B cell (primary cell): ENCODE measurements at regions of chr10 and their contacts with region 1.

Region 1: GRCh38 chr10:72215652-72216549 is at the starts of genes ANAPC16 and ASCC1:
- DNase-seq: peak; percentile 97
- ATAC-seq: peak; percentile 78
- H3K4me3 ChIP-seq: peak within 1 kb of the TSS; percentile 79 to 92 (median 83)
- H3K4me3 Mint-ChIP-seq: peak within 1 kb of the TSS; percentile 99
- H3K27ac ChIP-seq: peak within 1 kb of the TSS; percentile 92
- H3K27ac Mint-ChIP-seq: peak within 1 kb of the TSS; percentile 100
- H3K4me1 ChIP-seq: peaks cover 42 to 54% of the 10 kb centered on the region in 2 donors
- H3K4me1 Mint-ChIP-seq: peaks cover 54% of the 10 kb centered on the region
- H3K27me3 ChIP-seq: no peaks in the 10 kb centered on the region
- H3K27me3 Mint-ChIP-seq: no peaks in the 10 kb centered on the region
- CTCF ChIP-seq: no peak
- total RNA-seq, gene ANAPC16: 128 and 132 TPM in 2 replicates
- total RNA-seq, gene ASCC1: 28.1 and 31.3 TPM in 2 replicates

Region 2: GRCh38 chr10:72088889-72089575 is 126.9 kb before region 1 on chr10:
- CTCF ChIA-PET with region 1: no interaction called
- POLR2A ChIA-PET with region 1: interaction called, 11 read pairs
- intact Hi-C with region 1: loop called (anchors 1 kb)
- DNase-seq: no peak
- ATAC-seq: no peak
- H3K4me3 ChIP-seq: peak overlapping the region in 4 of 5 experiments; percentile 79 to 93 (median 88)
- H3K4me3 Mint-ChIP-seq: peak overlapping the region; percentile 100
- H3K27ac ChIP-seq: peak overlapping the region; percentile 89 to 92
- H3K27ac Mint-ChIP-seq: peak overlapping the region; percentile 100
- H3K4me1 ChIP-seq: peaks cover 24 to 33% of the 10 kb centered on the region in 2 donors
- H3K4me1 Mint-ChIP-seq: peaks cover 47% of the 10 kb centered on the region
- H3K27me3 ChIP-seq: no peaks in the 10 kb centered on the region
- H3K27me3 Mint-ChIP-seq: no peaks in the 10 kb centered on the region
- CTCF ChIP-seq: no peak

Region 3: DNA sequence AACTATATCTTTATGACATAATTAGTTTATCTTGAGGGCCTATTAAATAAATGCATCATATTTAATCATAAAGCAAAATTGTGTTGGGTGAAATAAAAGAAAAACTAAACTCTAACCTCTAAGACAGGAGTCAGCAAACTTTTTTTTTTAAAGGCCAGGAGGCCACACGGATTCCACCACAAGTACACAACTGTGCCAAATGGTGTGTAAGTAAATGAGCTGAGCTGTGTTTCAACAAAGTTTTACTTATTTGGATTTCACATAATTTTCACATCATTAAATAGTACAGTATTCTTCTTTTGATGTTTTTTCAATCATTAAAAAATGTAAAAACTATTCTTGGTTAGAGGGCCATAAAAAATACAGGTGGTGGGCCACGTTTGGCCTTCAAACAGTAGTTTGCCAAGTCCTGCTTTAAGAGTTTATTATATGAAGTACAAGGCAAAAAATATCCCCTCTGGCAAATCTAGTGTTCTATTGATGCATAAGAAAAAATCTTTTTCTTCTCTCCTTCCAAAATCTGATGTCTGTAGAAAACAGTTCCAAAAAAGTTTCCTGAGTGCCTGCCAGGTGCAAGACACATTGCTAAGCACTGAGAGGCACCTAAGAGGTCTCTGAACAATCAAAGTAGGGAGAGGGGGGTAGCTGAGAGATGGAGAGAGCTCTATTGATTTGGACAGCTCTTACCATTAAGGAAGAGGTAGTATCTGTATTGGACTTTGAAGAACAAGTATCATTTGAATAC is 101.0 kb before region 1 on chr10:
- CTCF ChIA-PET with region 1: no interaction called
- POLR2A ChIA-PET with region 1: no interaction called
- intact Hi-C with region 1: no loop called
- DNase-seq: no peak
- ATAC-seq: no peak
- H3K4me3 ChIP-seq: no peak overlapping the region
- H3K4me3 Mint-ChIP-seq: no peak overlapping the region
- H3K27ac ChIP-seq: no peak overlapping the region
- H3K27ac Mint-ChIP-seq: no peak overlapping the region
- H3K4me1 ChIP-seq: peaks cover under 1% of the 10 kb centered on the region in 2 donors
- H3K4me1 Mint-ChIP-seq: no peaks in the 10 kb centered on the region
- H3K27me3 ChIP-seq: no peaks in the 10 kb centered on the region
- H3K27me3 Mint-ChIP-seq: no peaks in the 10 kb centered on the region
- CTCF ChIP-seq: no peak

Region 4: DNA sequence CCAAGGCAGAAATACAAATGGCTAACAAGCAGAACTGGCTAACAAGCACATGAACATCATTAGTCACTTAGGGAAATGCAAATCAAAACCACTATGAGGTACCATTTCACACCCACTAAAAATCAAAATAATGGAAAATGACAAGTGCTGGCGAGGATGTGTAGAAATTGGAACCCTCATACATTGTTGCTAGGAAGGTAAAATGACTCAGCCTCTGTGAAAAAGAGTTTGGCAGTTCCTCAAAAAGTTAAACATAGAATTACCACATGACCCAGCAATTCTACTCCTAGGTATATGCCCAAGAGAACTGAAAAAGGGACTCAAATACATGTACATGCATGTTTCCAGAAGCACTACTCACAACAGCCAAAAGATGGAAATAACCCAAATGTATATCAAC is 52.9 kb before region 1 on chr10:
- CTCF ChIA-PET with region 1: no interaction called
- POLR2A ChIA-PET with region 1: no interaction called
- intact Hi-C with region 1: no loop called
- DNase-seq: no peak
- ATAC-seq: no peak
- H3K4me3 ChIP-seq: no peak overlapping the region
- H3K4me3 Mint-ChIP-seq: no peak overlapping the region
- H3K27ac ChIP-seq: no peak overlapping the region
- H3K27ac Mint-ChIP-seq: no peak overlapping the region
- H3K4me1 ChIP-seq: no peaks in the 10 kb centered on the region
- H3K4me1 Mint-ChIP-seq: peaks cover 3% of the 10 kb centered on the region
- H3K27me3 ChIP-seq: no peaks in the 10 kb centered on the region
- H3K27me3 Mint-ChIP-seq: no peaks in the 10 kb centered on the region
- CTCF ChIP-seq: no peak

Region 5: DNA sequence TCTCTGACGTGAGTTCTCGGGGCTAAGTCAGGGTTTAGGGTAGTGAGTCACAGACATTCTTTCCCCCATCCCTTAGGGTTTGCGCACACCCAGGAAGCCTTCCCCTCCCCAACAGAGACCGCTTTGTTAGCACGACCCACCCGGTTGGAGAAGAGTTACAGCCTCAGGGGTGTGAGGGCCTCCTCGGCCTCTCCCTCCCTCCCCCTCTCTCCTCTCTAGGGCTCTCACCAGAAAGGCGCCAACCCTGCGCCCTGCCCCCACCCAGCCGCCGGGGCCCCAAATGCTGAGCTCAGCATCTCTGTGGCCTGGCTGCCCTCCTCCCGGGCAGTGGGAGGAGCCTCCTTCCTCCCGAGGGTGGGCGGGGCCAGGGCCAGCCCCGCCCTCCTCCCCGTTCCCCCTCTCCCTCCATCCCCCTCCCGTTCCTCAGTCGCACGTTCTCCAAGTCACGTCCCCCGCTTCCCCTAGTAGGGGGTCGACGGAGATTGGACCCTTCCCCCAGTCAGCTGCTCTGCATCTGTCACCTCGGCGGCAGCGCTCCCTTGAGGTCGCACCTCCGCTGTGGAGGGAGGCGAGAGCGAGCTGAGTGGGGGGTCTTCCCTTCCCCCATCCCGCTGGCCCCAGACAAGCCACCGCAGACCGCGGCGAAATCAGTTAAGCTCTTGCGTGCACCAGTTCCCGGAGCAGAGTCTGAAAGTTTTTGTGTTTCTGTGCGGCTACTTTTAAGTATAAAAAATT is 44.9 kb after region 1 on chr10:
- CTCF ChIA-PET with region 1: interaction called, 7 read pairs
- POLR2A ChIA-PET with region 1: interaction called, 4 read pairs
- intact Hi-C with region 1: loop called (anchors 5 kb)
- DNase-seq: peak; percentile 81
- ATAC-seq: peak; percentile 81
- H3K4me3 ChIP-seq: peak overlapping the region; percentile 51 to 80 (median 73)
- H3K4me3 Mint-ChIP-seq: peak overlapping the region; percentile 94
- H3K27ac ChIP-seq: peak overlapping the region; percentile 47 to 67
- H3K27ac Mint-ChIP-seq: peak overlapping the region; percentile 89
- H3K4me1 ChIP-seq: peaks cover 48 to 68% of the 10 kb centered on the region in 2 donors
- H3K4me1 Mint-ChIP-seq: peaks cover 51% of the 10 kb centered on the region
- H3K27me3 ChIP-seq: no peaks in the 10 kb centered on the region
- H3K27me3 Mint-ChIP-seq: no peaks in the 10 kb centered on the region
- CTCF ChIP-seq: no peak

Region 6: GRCh38 chr10:72319416-72320254 is 103.7 kb after region 1 on chr10:
- CTCF ChIA-PET with region 1: no interaction called
- POLR2A ChIA-PET with region 1: interaction called, 27 read pairs
- intact Hi-C with region 1: loop called (anchors 1 kb)
- DNase-seq: peak; percentile 92
- ATAC-seq: peak; percentile 65
- H3K4me3 ChIP-seq: peak overlapping the region in 4 of 5 experiments; percentile 49 to 68 (median 58)
- H3K4me3 Mint-ChIP-seq: peak overlapping the region; percentile 88
- H3K27ac ChIP-seq: peak overlapping the region; percentile 94 to 95
- H3K27ac Mint-ChIP-seq: peak overlapping the region; percentile 99
- H3K4me1 ChIP-seq: peaks cover 78 to 91% of the 10 kb centered on the region in 2 donors
- H3K4me1 Mint-ChIP-seq: peaks cover 78% of the 10 kb centered on the region
- H3K27me3 ChIP-seq: no peaks in the 10 kb centered on the region
- H3K27me3 Mint-ChIP-seq: no peaks in the 10 kb centered on the region
- CTCF ChIP-seq: no peak

Region 7: GRCh38 chr10:72354478-72355213 is 138.7 kb after region 1 on chr10 and contains the start of gene DNAJB12:
- CTCF ChIA-PET with region 1: interaction called, 4 read pairs
- POLR2A ChIA-PET with region 1: no interaction called
- intact Hi-C with region 1: loop called (anchors 1 kb)
- DNase-seq: peak; percentile 97
- ATAC-seq: peak; percentile 87
- H3K4me3 ChIP-seq: peak within 1 kb of the TSS; percentile 65 to 98 (median 97)
- H3K4me3 Mint-ChIP-seq: peak within 1 kb of the TSS; percentile 99
- H3K27ac ChIP-seq: peak within 1 kb of the TSS; percentile 90 to 97
- H3K27ac Mint-ChIP-seq: peak within 1 kb of the TSS; percentile 99
- H3K4me1 ChIP-seq: peaks cover 15 to 17% of the 10 kb centered on the region in 2 donors
- H3K4me1 Mint-ChIP-seq: peaks cover 39% of the 10 kb centered on the region
- H3K27me3 ChIP-seq: no peaks in the 10 kb centered on the region
- H3K27me3 Mint-ChIP-seq: no peaks in the 10 kb centered on the region
- CTCF ChIP-seq: no peak
- total RNA-seq, gene DNAJB12: 42.3 and 44.1 TPM in 2 replicates

Region 8: GRCh38 chr10:72692057-72692910 is 476.4 kb after region 1 on chr10 and contains the start of gene MCU:
- CTCF ChIA-PET with region 1: no interaction called
- POLR2A ChIA-PET with region 1: no interaction called
- intact Hi-C with region 1: loop called (anchors 5 kb)
- DNase-seq: peak; percentile 94
- ATAC-seq: peak; percentile 95
- H3K4me3 ChIP-seq: peak within 1 kb of the TSS; percentile 64 to 91 (median 79)
- H3K4me3 Mint-ChIP-seq: peak within 1 kb of the TSS; percentile 95
- H3K27ac ChIP-seq: peak within 1 kb of the TSS; percentile 58 to 72
- H3K27ac Mint-ChIP-seq: peak within 1 kb of the TSS; percentile 91
- H3K4me1 ChIP-seq: peaks cover 28 to 33% of the 10 kb centered on the region in 2 donors
- H3K4me1 Mint-ChIP-seq: peaks cover 43% of the 10 kb centered on the region
- H3K27me3 ChIP-seq: no peaks in the 10 kb centered on the region
- H3K27me3 Mint-ChIP-seq: no peaks in the 10 kb centered on the region
- CTCF ChIP-seq: no peak
- total RNA-seq, gene MCU: 17.6 and 21.1 TPM in 2 replicates